CD8-positive, alpha-beta T cell (primary cell): ENCODE measurements at regions of chr2 and their contacts with region 1.

Region 1: GRCh38 chr2:37436323-37436722 is 91.9 kb downstream of the QPCT start:
- DNase-seq: no peak
- ATAC-seq: no peak
- H3K4me3 ChIP-seq: no peak overlapping the region
- H3K4me3 Mint-ChIP-seq: no peak overlapping the region
- H3K27ac ChIP-seq: no peak overlapping the region
- H3K27ac Mint-ChIP-seq: no peak overlapping the region
- H3K4me1 ChIP-seq: no peaks in the 10 kb centered on the region
- H3K4me1 Mint-ChIP-seq: no peaks in the 10 kb centered on the region
- H3K27me3 ChIP-seq: peaks cover 0 to under 1% of the 10 kb centered on the region in 2 experiments
- H3K27me3 Mint-ChIP-seq: peaks cover 8% of the 10 kb centered on the region
- CTCF ChIP-seq: no peak

Region 2: DNA sequence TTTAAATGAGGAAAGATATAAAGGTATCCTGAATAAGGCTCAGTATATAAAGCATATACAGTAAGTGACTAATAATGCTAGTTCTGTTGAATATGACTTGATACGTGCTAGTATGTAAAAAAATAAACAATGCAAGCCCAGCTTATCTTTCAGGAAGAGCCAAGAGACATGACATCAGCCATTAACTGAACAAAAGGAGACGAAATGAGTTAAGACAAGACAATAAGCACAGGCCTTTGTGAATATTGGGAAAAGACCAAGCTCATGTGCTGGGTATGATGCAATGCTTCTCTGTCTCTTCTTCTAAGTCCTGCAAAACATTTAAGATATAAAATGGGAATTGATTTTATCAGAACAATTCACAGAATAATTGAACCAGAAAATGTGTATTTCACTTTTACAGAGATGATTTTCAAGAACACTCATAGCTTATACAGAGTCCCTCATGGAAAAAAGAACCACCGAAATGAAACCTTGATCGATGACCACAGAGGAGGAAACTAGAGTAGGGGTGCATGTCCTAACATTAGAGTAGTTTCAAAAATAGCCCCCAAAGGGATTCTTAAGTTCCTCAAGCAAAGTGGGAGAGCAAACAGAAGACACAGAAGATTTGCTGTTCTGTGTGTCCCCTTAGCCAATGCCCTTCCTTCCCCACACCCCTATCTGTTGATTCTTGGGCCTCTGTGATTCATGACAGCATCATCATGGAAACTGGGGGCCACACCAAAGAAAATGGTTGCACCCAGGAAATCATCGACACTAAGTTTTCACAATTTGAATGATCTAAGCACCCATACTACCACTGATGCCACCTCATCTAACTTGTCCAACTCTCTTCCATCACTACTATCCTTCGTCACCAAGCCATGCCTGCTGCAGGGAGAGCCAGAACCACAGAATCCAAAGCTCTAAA is 1148.7 kb before region 1 on chr2:
- CTCF ChIA-PET with region 1: no interaction called
- POLR2A ChIA-PET with region 1: no interaction called
- intact Hi-C with region 1: no loop called
- DNase-seq: no peak
- ATAC-seq: no peak
- H3K4me3 ChIP-seq: no peak overlapping the region
- H3K4me3 Mint-ChIP-seq: no peak overlapping the region
- H3K27ac ChIP-seq: no peak overlapping the region
- H3K27ac Mint-ChIP-seq: no peak overlapping the region
- H3K4me1 ChIP-seq: no peaks in the 10 kb centered on the region
- H3K4me1 Mint-ChIP-seq: no peaks in the 10 kb centered on the region
- H3K27me3 ChIP-seq: no peaks in the 10 kb centered on the region
- H3K27me3 Mint-ChIP-seq: no peaks in the 10 kb centered on the region
- CTCF ChIP-seq: no peak

Region 3: GRCh38 chr2:37456479-37456878 is 20.2 kb after region 1 on chr2:
- CTCF ChIA-PET with region 1: no interaction called
- POLR2A ChIA-PET with region 1: interaction called, 14 read pairs
- intact Hi-C with region 1: no loop called
- DNase-seq: peak in 8 of 9 experiments; percentile 19 to 73 (median 48)
- ATAC-seq: peak; percentile 80
- H3K4me3 ChIP-seq: peak overlapping the region in 1 of 2 experiments; percentile 28
- H3K4me3 Mint-ChIP-seq: peak overlapping the region; percentile 55
- H3K27ac ChIP-seq: peak overlapping the region in 1 of 2 experiments; percentile 64
- H3K27ac Mint-ChIP-seq: peak overlapping the region; percentile 79
- H3K4me1 ChIP-seq: peaks cover 56% of the 10 kb centered on the region
- H3K4me1 Mint-ChIP-seq: peaks cover 82% of the 10 kb centered on the region
- H3K27me3 ChIP-seq: no peaks in the 10 kb centered on the region
- H3K27me3 Mint-ChIP-seq: no peaks in the 10 kb centered on the region
- CTCF ChIP-seq: no peak

Region 4: DNA sequence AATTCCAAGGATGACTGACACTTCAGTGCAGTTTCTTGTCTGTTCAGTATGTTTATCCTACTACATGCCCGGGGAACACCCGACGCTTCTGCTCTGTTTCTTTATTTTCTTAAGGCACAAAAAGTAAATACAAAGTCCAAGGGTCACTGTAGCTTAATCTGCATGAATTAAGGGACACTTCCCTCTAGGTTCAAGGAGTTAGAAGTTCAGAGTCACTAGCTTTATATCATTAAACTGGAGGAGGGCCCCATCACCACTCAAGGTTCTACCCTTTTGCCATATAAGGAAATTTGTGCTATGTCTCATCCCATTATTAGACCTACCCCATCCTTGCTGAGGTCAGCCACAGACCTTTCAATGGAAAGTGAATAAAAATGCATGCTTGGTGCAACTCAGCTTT is 461.2 kb after region 1 on chr2:
- CTCF ChIA-PET with region 1: no interaction called
- POLR2A ChIA-PET with region 1: no interaction called
- intact Hi-C with region 1: no loop called
- DNase-seq: no peak
- ATAC-seq: no peak
- H3K4me3 ChIP-seq: no peak overlapping the region
- H3K4me3 Mint-ChIP-seq: no peak overlapping the region
- H3K27ac ChIP-seq: no peak overlapping the region
- H3K27ac Mint-ChIP-seq: no peak overlapping the region
- H3K4me1 ChIP-seq: peaks cover 11% of the 10 kb centered on the region
- H3K4me1 Mint-ChIP-seq: peaks cover 13% of the 10 kb centered on the region
- H3K27me3 ChIP-seq: no peaks in the 10 kb centered on the region
- H3K27me3 Mint-ChIP-seq: no peaks in the 10 kb centered on the region
- CTCF ChIP-seq: no peak